Activated CD4-positive, alpha-beta memory T cell treated with anti-CD3 and anti-CD28 coated beads for 36 hours (primary cell): ENCODE measurements at regions of chr3 and their contacts with region 1.

Region 1: DNA sequence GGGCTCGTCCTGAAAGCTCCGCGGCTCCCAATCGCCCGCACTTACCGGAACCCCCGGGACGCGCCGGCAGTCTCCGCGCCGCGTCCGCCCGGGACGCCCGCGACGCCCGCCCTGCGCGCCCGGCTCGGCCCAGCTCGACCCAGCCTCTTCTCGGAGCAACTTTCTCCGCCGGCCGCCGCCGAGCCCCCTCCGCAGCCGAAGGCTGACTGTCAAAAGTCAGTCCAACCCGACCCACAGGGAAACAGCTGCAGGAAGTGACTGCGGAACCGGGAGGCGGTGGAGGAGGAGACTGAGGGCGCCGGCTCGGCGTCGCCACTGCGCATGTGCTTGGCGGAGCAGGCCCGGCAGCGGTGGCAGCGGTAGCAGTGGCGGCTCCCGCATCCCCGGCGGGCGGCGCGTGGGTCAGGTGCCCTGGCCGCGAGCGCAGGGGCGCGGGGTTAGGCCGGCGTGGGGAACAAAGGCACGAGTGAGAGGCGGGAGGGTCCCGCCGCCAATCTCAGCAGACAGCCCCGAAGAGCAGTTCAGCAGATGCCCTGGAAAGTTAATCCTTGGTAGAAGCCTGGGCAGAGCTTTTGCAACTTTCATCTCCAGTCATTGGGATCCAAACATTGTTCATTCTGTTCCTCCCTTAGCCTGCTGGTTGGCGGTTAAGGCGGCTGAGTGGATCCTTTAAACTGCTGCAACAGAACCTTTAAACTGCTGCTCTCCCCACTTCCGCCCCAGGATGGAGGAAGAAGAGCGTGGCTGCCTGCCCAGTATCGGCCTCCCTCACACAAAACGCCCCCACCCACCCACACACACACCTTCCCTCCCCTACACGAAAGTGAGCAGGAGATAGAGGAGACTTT is at the start of gene ZMAT3:
- DNase-seq: peak; percentile 89
- H3K4me3 Mint-ChIP-seq: peak within 1 kb of the TSS; percentile 96
- H3K27ac Mint-ChIP-seq: peak within 1 kb of the TSS; percentile 89
- H3K4me1 Mint-ChIP-seq: peaks cover 35% of the 10 kb centered on the region
- H3K27me3 Mint-ChIP-seq: no peaks in the 10 kb centered on the region
- total RNA-seq, gene ZMAT3: 9.0 TPM

Region 2: GRCh38 chr3:178943591-178943990 is 128.2 kb before region 1 on chr3:
- CTCF ChIA-PET with region 1: no interaction called
- POLR2A ChIA-PET with region 1: no interaction called
- intact Hi-C with region 1: no loop called
- DNase-seq: no peak
- H3K4me3 Mint-ChIP-seq: no peak overlapping the region
- H3K27ac Mint-ChIP-seq: no peak overlapping the region
- H3K4me1 Mint-ChIP-seq: no peaks in the 10 kb centered on the region
- H3K27me3 Mint-ChIP-seq: no peaks in the 10 kb centered on the region

Region 3: GRCh38 chr3:179015551-179016020 is 56.2 kb before region 1 on chr3:
- CTCF ChIA-PET with region 1: interaction called, 6 read pairs
- POLR2A ChIA-PET with region 1: interaction called, 4 read pairs
- intact Hi-C with region 1: loop called (anchors 1 kb)
- DNase-seq: peak; percentile 49
- H3K4me3 Mint-ChIP-seq: no peak overlapping the region
- H3K27ac Mint-ChIP-seq: peak overlapping the region; percentile 44
- H3K4me1 Mint-ChIP-seq: peaks cover 33% of the 10 kb centered on the region
- H3K27me3 Mint-ChIP-seq: no peaks in the 10 kb centered on the region

Region 4: GRCh38 chr3:179037351-179037750 is 34.4 kb before region 1 on chr3:
- CTCF ChIA-PET with region 1: interaction called, 8 read pairs
- POLR2A ChIA-PET with region 1: interaction called, 5 read pairs
- intact Hi-C with region 1: loop called (anchors 2 kb)
- DNase-seq: peak; percentile 84
- H3K4me3 Mint-ChIP-seq: peak overlapping the region; percentile 55
- H3K27ac Mint-ChIP-seq: peak overlapping the region; percentile 71
- H3K4me1 Mint-ChIP-seq: peaks cover 9% of the 10 kb centered on the region
- H3K27me3 Mint-ChIP-seq: no peaks in the 10 kb centered on the region

Region 5: GRCh38 chr3:179083977-179084376 is 12.2 kb after region 1 on chr3:
- CTCF ChIA-PET with region 1: interaction called, 19 read pairs
- POLR2A ChIA-PET with region 1: interaction called, 4 read pairs
- intact Hi-C with region 1: no loop called
- DNase-seq: no peak
- H3K4me3 Mint-ChIP-seq: no peak overlapping the region
- H3K27ac Mint-ChIP-seq: no peak overlapping the region
- H3K4me1 Mint-ChIP-seq: peaks cover 12% of the 10 kb centered on the region
- H3K27me3 Mint-ChIP-seq: no peaks in the 10 kb centered on the region

Region 6: GRCh38 chr3:179309225-179310078 is 237.7 kb after region 1 on chr3:
- CTCF ChIA-PET with region 1: interaction called, 34 read pairs
- POLR2A ChIA-PET with region 1: no interaction called
- intact Hi-C with region 1: no loop called
- DNase-seq: no peak
- H3K4me3 Mint-ChIP-seq: no peak overlapping the region
- H3K27ac Mint-ChIP-seq: no peak overlapping the region
- H3K4me1 Mint-ChIP-seq: no peaks in the 10 kb centered on the region
- H3K27me3 Mint-ChIP-seq: no peaks in the 10 kb centered on the region

Region 7: GRCh38 chr3:179347345-179348194 is 275.8 kb after region 1 on chr3 and contains the start of gene MFN1:
- CTCF ChIA-PET with region 1: no interaction called
- POLR2A ChIA-PET with region 1: no interaction called
- intact Hi-C with region 1: loop called (anchors 1 kb)
- DNase-seq: peak; percentile 94
- H3K4me3 Mint-ChIP-seq: peak within 1 kb of the TSS; percentile 98
- H3K27ac Mint-ChIP-seq: peak within 1 kb of the TSS; percentile 94
- H3K4me1 Mint-ChIP-seq: peaks cover 23% of the 10 kb centered on the region
- H3K27me3 Mint-ChIP-seq: no peaks in the 10 kb centered on the region
- total RNA-seq, gene MFN1: 31.1 to 31.3 TPM